Ascending aorta (tissue), 2 donors: ENCODE measurements at regions of chr10 and their contacts with region 1.

Region 1: DNA sequence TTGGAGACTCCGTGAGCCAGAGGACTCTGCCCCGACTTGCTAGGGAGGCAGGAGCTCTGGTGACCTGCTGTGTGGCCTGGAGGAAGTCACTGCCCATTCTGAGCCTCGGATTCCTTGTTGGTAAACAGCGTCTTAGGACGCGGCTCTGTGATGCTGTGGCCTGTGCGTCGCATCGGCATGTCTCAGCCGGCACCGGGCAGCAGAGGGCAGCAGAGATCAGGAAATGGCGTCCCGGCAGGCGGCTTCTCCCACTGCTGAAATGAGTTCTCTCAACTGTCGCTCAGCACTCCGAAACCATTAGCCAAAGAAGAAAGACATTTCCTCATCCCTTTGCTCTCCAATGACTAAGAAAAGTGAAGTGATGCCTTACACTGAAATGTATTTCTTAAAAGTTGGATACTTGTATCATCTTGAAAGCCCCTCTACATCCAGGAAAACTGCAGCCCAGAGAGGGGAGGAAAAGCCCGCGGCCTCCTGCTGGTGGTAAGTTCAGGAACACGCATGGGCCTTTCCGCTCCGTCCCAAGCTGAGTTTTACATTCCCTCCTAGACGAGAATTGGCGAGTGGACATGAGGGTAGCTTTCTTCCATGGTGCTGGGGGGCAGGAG is 91.7 kb downstream of the WDR11 start:
- DNase-seq: peak in 1 of 2 donors; percentile 86
- H3K4me3 ChIP-seq: no peak overlapping the region
- H3K27ac ChIP-seq: no peak overlapping the region
- H3K4me1 ChIP-seq: no peaks in the 10 kb centered on the region
- H3K27me3 ChIP-seq: no peaks in the 10 kb centered on the region
- CTCF ChIP-seq: peak; percentile 75 to 84 (median 80)

Region 2: GRCh38 chr10:120931423-120931822 is 11.5 kb before region 1 on chr10:
- intact Hi-C with region 1: no loop called
- DNase-seq: no peak
- H3K4me3 ChIP-seq: no peak overlapping the region
- H3K27ac ChIP-seq: no peak overlapping the region
- H3K4me1 ChIP-seq: no peaks in the 10 kb centered on the region
- H3K27me3 ChIP-seq: no peaks in the 10 kb centered on the region
- CTCF ChIP-seq: no peak

Region 3: GRCh38 chr10:121734589-121735045 is 791.7 kb after region 1 on chr10:
- intact Hi-C with region 1: loop called (anchors 2 kb)
- DNase-seq: no peak
- H3K4me3 ChIP-seq: no peak overlapping the region
- H3K27ac ChIP-seq: no peak overlapping the region
- H3K4me1 ChIP-seq: no peaks in the 10 kb centered on the region
- H3K27me3 ChIP-seq: no peaks in the 10 kb centered on the region
- CTCF ChIP-seq: peak; percentile 4 to 64 (median 53)

Region 4: GRCh38 chr10:121886997-121887622 is 944.2 kb after region 1 on chr10:
- intact Hi-C with region 1: loop called (anchors 2 kb)
- DNase-seq: no peak
- H3K4me3 ChIP-seq: no peak overlapping the region
- H3K27ac ChIP-seq: no peak overlapping the region
- H3K4me1 ChIP-seq: no peaks in the 10 kb centered on the region
- H3K27me3 ChIP-seq: no peaks in the 10 kb centered on the region
- CTCF ChIP-seq: peak in 2 of 3 experiments; percentile 49 to 60

Region 5: GRCh38 chr10:121900443-121901174 is 957.7 kb after region 1 on chr10:
- intact Hi-C with region 1: loop called (anchors 5 kb)
- DNase-seq: no peak
- H3K4me3 ChIP-seq: no peak overlapping the region
- H3K27ac ChIP-seq: no peak overlapping the region
- H3K4me1 ChIP-seq: no peaks in the 10 kb centered on the region
- H3K27me3 ChIP-seq: no peaks in the 10 kb centered on the region
- CTCF ChIP-seq: peak; percentile 38 to 71 (median 62)